ENCODE measurements at regions of chr11 and their contacts with region 1.

Region 1: DNA sequence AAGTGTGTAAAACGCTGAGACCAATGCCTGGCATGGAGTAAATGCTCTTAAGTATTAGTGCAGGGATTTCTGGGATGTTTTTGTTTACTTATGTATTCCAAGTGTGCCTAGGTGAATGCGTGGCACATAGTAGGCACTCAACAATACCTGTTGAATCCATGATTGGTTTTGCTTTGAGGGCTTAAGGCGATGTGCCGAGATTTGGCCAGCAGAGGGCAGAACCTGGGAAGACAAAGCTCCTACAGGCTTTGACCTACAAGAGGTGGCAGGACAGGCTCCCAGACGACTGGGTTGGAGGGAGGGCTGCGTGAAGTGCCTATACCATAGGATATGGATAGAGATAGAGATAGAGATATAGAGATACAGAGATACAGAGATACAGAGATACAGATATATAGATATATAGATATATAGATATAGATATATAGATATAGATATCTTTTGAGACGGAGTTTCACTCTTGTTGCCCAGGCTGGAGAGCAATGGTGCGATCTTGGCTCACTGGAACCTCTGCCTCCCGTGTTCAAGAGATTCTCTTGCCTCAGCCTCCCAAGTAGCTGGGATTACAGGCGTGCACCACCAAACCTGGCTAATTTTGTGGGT is 13.9 kb downstream of the KCNE3 start:
- DNase-seq: peak; percentile 11

Region 2: GRCh38 chr11:74570266-74571061 is 117.0 kb after region 1 on chr11:
- in situ Hi-C with region 1: loop called (anchors 25 kb)
- DNase-seq: peak; percentile 21

Measured in Caki2 (cell line).